CD8-positive, alpha-beta memory T cell (primary cell): ENCODE measurements at regions of chr6 and their contacts with region 1.

Region 1: GRCh38 chr6:109455502-109456282 is at the start of gene MICAL1:
- DNase-seq: peak; percentile 71 to 88 (median 79)
- H3K4me3 ChIP-seq: peak within 1 kb of the TSS; percentile 91
- H3K4me3 Mint-ChIP-seq: peak within 1 kb of the TSS; percentile 90 to 99 (median 97)
- H3K27ac ChIP-seq: peak within 1 kb of the TSS; percentile 94
- H3K27ac Mint-ChIP-seq: peak within 1 kb of the TSS; percentile 88 to 100 (median 98)
- H3K4me1 ChIP-seq: peaks cover 55% of the 10 kb centered on the region
- H3K4me1 Mint-ChIP-seq: peaks cover 51 to 67% (median 57%) of the 10 kb centered on the region in 3 donors
- H3K27me3 ChIP-seq: no peaks in the 10 kb centered on the region
- H3K27me3 Mint-ChIP-seq: peaks cover 0 to 1% of the 10 kb centered on the region in 2 donors
- total RNA-seq, gene MICAL1: 33.2 to 34.7 TPM

Region 2: GRCh38 chr6:109440331-109441068 is 15.2 kb before region 1 on chr6 and contains the starts of genes PPIL6 and SMPD2:
- CTCF ChIA-PET with region 1: interaction called, 40 read pairs
- POLR2A ChIA-PET with region 1: interaction called, 45 read pairs
- DNase-seq: peak; percentile 73 to 86 (median 79)
- H3K4me3 ChIP-seq: peak within 1 kb of the TSS; percentile 69
- H3K4me3 Mint-ChIP-seq: peak within 1 kb of the TSS; percentile 90 to 95 (median 93)
- H3K27ac ChIP-seq: peak within 1 kb of the TSS; percentile 90
- H3K27ac Mint-ChIP-seq: peak within 1 kb of the TSS; percentile 94 to 99 (median 96)
- H3K4me1 ChIP-seq: peaks cover 21% of the 10 kb centered on the region
- H3K4me1 Mint-ChIP-seq: peaks cover 22 to 32% (median 32%) of the 10 kb centered on the region in 3 donors
- H3K27me3 ChIP-seq: no peaks in the 10 kb centered on the region
- H3K27me3 Mint-ChIP-seq: peaks cover 0 to 3% of the 10 kb centered on the region in 2 donors
- total RNA-seq, gene PPIL6: 0.13 TPM in 1 of 2 experiments, not detected in the other
- total RNA-seq, gene SMPD2: 15.1 to 15.8 TPM

Region 3: DNA sequence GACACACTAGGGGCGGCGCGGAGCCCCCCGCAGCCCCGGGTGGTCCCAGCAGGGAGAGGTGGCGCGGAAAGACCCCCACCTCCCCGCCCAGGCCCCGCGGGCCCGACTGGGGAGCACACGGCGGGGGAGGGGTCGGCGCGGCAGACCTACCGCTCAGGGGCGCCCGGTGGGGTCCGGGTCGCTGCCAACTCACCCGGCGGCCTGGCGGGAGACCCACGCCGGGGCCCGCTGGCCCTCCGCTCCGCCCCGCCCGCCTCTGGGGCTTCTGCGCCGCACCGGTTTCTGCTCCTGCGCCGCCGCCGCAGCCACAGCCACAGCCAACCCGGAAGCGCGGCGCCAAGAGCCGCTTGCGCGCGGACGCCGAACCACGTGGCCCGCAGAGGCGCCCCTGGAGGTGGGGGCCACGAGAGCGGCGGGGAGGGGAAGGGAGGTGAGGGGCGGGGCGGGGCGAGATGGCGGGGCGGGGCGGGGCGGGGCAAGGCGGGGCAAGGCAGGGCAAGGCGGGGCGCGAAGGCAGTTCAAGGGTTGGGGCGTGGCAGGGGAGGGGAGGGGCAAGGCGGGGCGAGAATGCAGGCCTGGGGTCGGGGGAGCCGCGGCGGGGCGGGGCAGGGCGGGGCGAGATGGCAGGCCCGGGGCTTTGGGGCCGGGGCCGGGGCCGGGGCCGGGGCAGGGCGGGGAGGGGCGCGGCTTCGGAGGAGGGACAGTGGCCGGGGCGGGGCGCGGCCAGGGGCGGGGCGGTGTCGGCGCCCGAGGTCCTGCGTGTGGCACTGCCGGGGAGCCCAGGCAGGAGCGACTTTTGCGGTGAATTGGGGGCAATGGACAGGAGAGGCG is 27.4 kb after region 1 on chr6 and contains the start of gene ZBTB24:
- CTCF ChIA-PET with region 1: interaction called, 10 read pairs
- POLR2A ChIA-PET with region 1: interaction called, 20 read pairs
- DNase-seq: peak; percentile 85 to 93 (median 88)
- H3K4me3 ChIP-seq: peak within 1 kb of the TSS; percentile 88
- H3K4me3 Mint-ChIP-seq: peak within 1 kb of the TSS; percentile 92 to 99 (median 93)
- H3K27ac ChIP-seq: peak within 1 kb of the TSS; percentile 60
- H3K27ac Mint-ChIP-seq: peak within 1 kb of the TSS; percentile 83 to 95 (median 91)
- H3K4me1 ChIP-seq: peaks cover 42% of the 10 kb centered on the region
- H3K4me1 Mint-ChIP-seq: peaks cover 41 to 52% (median 52%) of the 10 kb centered on the region in 3 donors
- H3K27me3 ChIP-seq: no peaks in the 10 kb centered on the region
- H3K27me3 Mint-ChIP-seq: no peaks in the 10 kb centered on the region
- total RNA-seq, gene ZBTB24: 19.5 to 19.9 TPM

Region 4: DNA sequence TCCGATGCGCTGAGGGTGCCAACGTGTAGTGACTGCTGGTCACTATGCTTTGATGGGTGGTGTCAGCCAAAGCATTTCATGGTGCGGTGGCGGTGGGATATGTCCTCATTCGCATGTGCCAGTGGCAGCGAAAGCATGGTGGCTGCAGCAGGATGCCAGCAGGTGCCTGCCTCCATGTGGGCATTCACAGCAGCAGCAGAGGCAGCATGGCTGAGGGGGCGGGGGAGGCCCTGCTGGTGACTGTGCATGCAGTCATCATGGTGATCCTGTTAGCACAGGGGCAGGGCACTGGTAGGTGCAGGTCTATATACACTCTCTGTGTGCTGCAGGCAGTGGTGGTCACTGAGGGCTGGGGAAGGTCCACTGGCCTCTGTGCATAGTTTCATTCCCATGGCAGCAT is 257.4 kb after region 1 on chr6:
- CTCF ChIA-PET with region 1: no interaction called
- POLR2A ChIA-PET with region 1: no interaction called
- DNase-seq: no peak
- H3K4me3 ChIP-seq: no peak overlapping the region
- H3K4me3 Mint-ChIP-seq: no peak overlapping the region
- H3K27ac ChIP-seq: no peak overlapping the region
- H3K27ac Mint-ChIP-seq: peak overlapping the region in 1 of 8 donors; percentile 94
- H3K4me1 ChIP-seq: no peaks in the 10 kb centered on the region
- H3K4me1 Mint-ChIP-seq: peaks cover 0 to 28% (median 19%) of the 10 kb centered on the region in 3 donors
- H3K27me3 ChIP-seq: no peaks in the 10 kb centered on the region
- H3K27me3 Mint-ChIP-seq: no peaks in the 10 kb centered on the region